ENCODE measurements at regions of chr18 and their contacts with region 1.

Region 1: GRCh38 chr18:63367053-63367953 is at the start of gene KDSR:
- DNase-seq: peak; percentile 98
- H3K4me3 ChIP-seq: peak within 1 kb of the TSS; percentile 76 to 92 (median 86)
- H3K27ac ChIP-seq: peak within 1 kb of the TSS; percentile 95 to 98 (median 98)
- H3K4me1 ChIP-seq: peaks cover 3 to 29% (median 27%) of the 10 kb centered on the region in 4 donors
- H3K27me3 ChIP-seq: no peaks in the 10 kb centered on the region
- CTCF ChIP-seq: no peak
- EP300 ChIP-seq: peak in 1 of 4 donors; percentile 9
- POLR2A ChIP-seq: peak; percentile 55 to 67
- total RNA-seq, gene KDSR: 33.2 to 50.5 (median 42.7) TPM

Region 2: DNA sequence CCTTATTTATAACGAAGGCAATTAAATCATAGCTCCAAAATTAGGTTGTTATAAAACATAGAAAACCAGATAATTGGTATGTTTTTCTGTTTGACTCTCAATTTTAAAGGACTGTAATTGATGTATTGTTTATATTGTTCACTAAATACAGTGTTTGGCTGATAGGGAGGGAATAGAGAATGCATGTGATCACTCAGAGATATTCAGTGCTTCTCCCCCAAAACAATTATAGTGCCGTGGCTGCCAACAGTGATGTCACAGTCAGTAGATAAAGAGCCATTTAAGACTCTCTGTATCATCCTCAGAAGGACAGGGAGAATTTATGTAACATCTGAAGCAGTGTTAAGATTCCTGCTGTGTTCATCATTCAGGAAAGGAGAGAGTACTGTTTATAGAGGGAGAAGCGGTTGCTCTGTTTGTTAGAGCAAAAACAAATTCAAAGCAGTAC is 582.3 kb before region 1 on chr18:
- intact Hi-C with region 1: no loop called
- DNase-seq: peak; percentile 72
- H3K4me3 ChIP-seq: no peak overlapping the region
- H3K27ac ChIP-seq: peak overlapping the region; percentile 49 to 63 (median 58)
- H3K4me1 ChIP-seq: peaks cover 0 to 76% (median 60%) of the 10 kb centered on the region in 4 donors
- H3K27me3 ChIP-seq: no peaks in the 10 kb centered on the region
- CTCF ChIP-seq: no peak
- EP300 ChIP-seq: no peak
- POLR2A ChIP-seq: no peak

Region 3: GRCh38 chr18:63336352-63337099 is 30.8 kb before region 1 on chr18:
- intact Hi-C with region 1: no loop called
- DNase-seq: no peak
- H3K4me3 ChIP-seq: no peak overlapping the region
- H3K27ac ChIP-seq: peak overlapping the region; percentile 46 to 55 (median 52)
- H3K4me1 ChIP-seq: no peaks in the 10 kb centered on the region
- H3K27me3 ChIP-seq: no peaks in the 10 kb centered on the region
- CTCF ChIP-seq: no peak
- EP300 ChIP-seq: no peak
- POLR2A ChIP-seq: no peak

Region 4: DNA sequence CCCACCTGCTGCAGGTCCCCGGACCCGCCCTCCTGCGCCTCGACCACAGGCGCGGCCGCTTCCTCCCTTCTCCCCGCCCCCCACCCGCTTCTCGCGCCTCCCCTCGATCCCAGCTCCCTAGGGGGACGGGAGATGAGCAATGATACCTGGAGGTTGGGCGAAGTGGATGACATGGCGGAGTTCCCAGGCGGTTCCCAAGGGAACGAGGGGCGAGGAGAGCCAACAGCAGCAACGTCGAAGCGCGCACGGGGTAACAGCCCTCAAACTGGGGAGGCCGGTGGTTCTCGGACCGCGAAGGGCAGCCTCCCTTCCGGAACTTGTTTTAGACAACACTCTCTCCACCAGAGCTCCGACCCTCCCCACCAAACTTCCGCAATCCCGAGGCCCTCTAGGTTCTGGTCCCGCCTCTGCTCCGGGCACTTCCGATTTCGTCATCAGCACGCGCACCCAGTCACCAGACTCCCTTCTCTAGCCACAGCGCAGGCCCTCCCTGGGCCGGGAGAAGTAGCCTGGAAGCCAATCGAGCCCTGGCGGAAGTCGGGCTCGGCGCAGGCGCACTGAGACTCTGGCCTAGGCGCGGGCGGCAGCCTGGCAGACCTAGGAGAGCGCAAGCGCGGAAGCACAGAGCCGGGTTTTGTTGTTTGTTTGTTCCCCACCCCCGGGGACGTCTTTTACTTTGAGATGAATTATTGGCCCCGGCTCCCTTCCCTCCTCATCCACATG is 54.9 kb after region 1 on chr18 and contains the start of gene VPS4B:
- intact Hi-C with region 1: loop called (anchors 1 kb)
- DNase-seq: peak; percentile 100
- H3K4me3 ChIP-seq: peak within 1 kb of the TSS; percentile 68 to 89 (median 84)
- H3K27ac ChIP-seq: peak within 1 kb of the TSS; percentile 90 to 96 (median 92)
- H3K4me1 ChIP-seq: peaks cover 0 to 18% (median 15%) of the 10 kb centered on the region in 4 donors
- H3K27me3 ChIP-seq: no peaks in the 10 kb centered on the region
- CTCF ChIP-seq: no peak
- EP300 ChIP-seq: peak in 2 of 4 donors; percentile 51 to 81
- POLR2A ChIP-seq: peak; percentile 43 to 78
- total RNA-seq, gene VPS4B: 31.4 to 41.0 (median 38.3) TPM

Region 5: GRCh38 chr18:63444567-63444966 is 77.3 kb after region 1 on chr18:
- intact Hi-C with region 1: loop called (anchors 5 kb)
- DNase-seq: no peak
- H3K4me3 ChIP-seq: no peak overlapping the region
- H3K27ac ChIP-seq: peak overlapping the region; percentile 49 to 84 (median 66)
- H3K4me1 ChIP-seq: peaks cover 0 to 49% (median 37%) of the 10 kb centered on the region in 4 donors
- H3K27me3 ChIP-seq: no peaks in the 10 kb centered on the region
- CTCF ChIP-seq: no peak
- EP300 ChIP-seq: peak in 3 of 4 donors; percentile 36 to 72 (median 68)
- POLR2A ChIP-seq: no peak

Region 6: GRCh38 chr18:63457987-63458386 is 90.7 kb after region 1 on chr18:
- intact Hi-C with region 1: no loop called
- DNase-seq: no peak
- H3K4me3 ChIP-seq: no peak overlapping the region
- H3K27ac ChIP-seq: no peak overlapping the region
- H3K4me1 ChIP-seq: peaks cover 3 to 5% (median 4%) of the 10 kb centered on the region in 4 donors
- H3K27me3 ChIP-seq: no peaks in the 10 kb centered on the region
- CTCF ChIP-seq: no peak
- EP300 ChIP-seq: no peak
- POLR2A ChIP-seq: no peak

Region 7: DNA sequence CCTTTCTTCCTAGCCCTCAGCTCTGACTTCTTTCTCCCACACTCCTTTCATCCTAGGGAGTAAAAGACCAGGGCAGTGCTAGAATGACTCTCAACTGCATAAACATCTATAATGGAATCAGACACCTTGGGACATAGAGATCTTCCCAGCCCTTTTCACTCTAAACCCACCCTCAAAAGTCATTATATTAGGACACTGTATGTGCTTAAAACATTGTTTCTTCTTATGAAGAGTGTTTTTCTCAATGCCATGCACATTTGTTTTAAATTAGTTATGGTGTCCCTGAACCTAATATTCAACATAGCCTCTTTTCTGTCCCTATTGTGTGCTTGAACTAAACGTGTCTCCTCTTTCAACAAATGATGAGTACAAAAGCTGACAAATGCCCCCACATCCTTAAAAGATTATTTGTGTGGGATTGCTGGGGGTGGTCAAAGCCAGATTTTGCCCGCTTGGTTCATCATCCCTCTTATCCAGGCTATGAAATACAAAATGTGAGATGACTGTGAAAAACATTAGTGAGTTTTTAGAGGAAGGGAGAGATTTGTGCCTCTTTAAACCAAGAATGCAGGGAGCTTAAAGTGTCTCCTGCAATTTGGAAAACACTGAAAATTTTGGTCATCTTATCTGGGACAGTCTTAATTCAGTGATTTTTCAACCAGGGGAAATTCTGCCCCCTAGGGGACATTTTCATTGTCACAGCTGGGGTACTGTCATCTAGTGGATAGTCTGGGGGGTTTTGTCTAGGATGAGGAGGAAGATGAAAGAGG is 138.4 kb after region 1 on chr18:
- intact Hi-C with region 1: loop called (anchors 10 kb)
- DNase-seq: no peak
- H3K4me3 ChIP-seq: no peak overlapping the region
- H3K27ac ChIP-seq: no peak overlapping the region
- H3K4me1 ChIP-seq: no peaks in the 10 kb centered on the region
- H3K27me3 ChIP-seq: no peaks in the 10 kb centered on the region
- CTCF ChIP-seq: peak in 3 of 4 experiments; percentile 25 to 55 (median 39)
- EP300 ChIP-seq: no peak
- POLR2A ChIP-seq: no peak